ENCODE measurements at regions of chr4 and their contacts with region 1.

Region 1: DNA sequence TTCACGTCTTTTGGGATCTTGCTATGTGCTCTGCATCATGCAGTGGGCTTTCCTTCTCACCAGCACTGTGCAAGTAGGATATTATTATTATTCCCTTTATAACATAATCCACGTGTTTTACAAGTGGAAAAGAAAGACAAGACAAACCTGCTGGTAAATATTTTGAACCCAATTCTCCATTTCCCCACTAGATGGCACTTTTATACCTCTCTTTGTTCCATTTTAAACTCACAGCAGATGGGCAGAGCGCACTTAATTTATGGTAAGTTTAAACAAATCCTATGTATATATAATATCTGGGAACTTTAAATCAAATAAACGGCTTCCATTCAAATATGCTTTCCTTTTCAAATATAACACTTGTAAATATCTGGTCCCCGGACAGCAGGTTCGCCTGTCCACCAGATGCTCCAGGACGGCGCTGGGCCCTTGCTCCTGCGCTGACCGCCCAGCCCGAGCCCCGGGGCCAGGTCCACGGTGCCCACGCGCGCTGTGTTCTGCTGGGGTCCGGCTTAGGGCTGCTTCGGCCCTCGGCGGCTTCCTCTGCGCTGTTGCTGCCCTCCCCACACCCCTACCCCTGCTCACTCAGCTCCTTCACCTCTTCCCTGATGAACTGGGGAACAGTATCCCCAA is 31.1 kb downstream of the F11 start:
- DNase-seq: no peak
- ATAC-seq: no peak
- H3K4me3 Mint-ChIP-seq: no peak overlapping the region
- H3K27ac Mint-ChIP-seq: no peak overlapping the region
- H3K4me1 Mint-ChIP-seq: peaks cover 4% of the 10 kb centered on the region
- H3K27me3 Mint-ChIP-seq: peaks cover 18% of the 10 kb centered on the region
- CTCF ChIP-seq: peak; percentile 69

Region 2: DNA sequence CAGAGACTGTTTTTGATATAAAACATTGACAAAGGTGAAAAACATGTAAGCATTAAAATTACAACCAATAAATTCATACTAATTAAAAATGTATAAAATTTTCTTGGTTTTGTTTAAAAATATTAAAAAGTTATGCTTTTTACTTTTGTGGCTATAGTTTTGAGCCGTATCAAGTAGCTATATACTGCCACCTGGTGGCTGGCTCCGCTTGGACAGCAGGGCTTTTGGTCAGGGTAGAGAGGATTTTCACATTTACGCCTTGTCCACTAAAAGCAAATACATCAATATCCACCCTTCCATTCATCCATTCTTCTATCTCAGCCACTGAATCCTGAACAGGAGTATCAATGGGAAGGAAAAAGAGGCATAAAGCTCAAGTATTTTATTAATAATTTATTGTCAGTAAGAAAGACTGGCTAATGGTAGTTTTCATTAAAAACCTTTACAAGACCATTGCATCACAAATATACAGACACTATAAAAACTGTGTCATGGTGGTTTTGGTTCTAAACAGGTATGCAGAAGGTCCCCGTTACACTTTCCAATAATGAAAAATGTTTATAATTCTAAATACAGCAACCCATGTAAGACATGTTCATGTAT is 290.4 kb after region 1 on chr4:
- CTCF ChIA-PET with region 1: interaction called, 38 read pairs
- POLR2A ChIA-PET with region 1: no interaction called
- intact Hi-C with region 1: loop called (anchors 2 kb)
- DNase-seq: peak; percentile 79
- ATAC-seq: no peak
- H3K4me3 Mint-ChIP-seq: no peak overlapping the region
- H3K27ac Mint-ChIP-seq: no peak overlapping the region
- H3K4me1 Mint-ChIP-seq: no peaks in the 10 kb centered on the region
- H3K27me3 Mint-ChIP-seq: no peaks in the 10 kb centered on the region
- CTCF ChIP-seq: peak; percentile 88